Left ventricle myocardium superior (tissue), 1 donor: ENCODE measurements at regions of chr10 and their contacts with region 1.

Region 1: GRCh38 chr10:68301790-68302502 is 29.9 kb upstream of the HNRNPH3 start:
- DNase-seq: no peak
- ATAC-seq: peak; percentile 76

Region 2: DNA sequence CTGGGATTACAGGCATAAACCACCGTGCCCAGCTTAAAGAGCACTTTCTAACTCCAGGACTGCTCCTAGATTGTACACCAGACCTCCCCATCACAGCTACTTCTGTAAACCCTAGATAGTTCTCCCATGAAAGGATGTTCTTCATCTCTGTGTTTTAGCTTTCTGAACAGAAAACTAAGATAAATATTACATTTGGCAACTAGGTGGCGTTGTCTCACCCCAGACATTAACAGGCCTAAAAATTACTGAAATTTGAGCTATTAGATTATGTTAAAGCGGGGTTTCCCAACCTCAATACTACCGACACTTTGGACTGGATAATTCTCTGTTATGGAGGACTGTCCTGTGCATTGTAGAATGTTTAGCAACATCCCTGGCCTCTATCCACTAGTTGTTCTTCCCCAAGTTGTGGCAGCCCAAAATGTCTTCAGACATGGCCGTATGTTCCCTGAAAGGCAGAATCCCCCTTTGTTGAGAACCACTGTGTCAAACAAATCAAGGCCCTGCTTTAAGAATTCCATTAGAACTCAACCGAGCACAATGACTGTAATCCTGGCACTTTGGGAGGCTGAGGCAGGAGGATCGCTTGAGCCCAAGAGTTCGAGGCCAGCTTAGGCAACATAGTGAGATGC is 89.1 kb before region 1 on chr10:
- intact Hi-C with region 1: loop called (anchors 10 kb)
- DNase-seq: no peak
- ATAC-seq: no peak

Region 3: DNA sequence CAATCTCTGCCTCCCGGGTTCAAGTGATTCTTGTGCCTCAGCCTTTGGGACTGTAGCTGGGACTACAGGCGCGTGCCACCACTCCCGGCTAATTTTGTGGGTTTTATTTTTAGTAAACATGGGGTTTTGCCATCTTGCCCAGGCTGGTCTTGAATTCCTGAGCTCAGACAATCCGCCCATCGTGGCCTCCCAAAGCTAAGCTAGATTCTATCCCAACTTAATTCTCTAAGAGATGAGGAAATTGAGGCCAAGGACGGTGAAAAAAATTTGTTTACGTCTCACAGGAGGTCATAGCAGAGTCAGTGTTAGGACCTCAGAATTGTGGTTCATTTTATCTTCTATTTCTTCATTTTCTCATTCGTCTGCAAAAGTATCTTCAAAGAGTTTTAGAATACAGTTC is 425.2 kb after region 1 on chr10:
- intact Hi-C with region 1: no loop called
- DNase-seq: no peak
- ATAC-seq: no peak